CD8-positive, alpha-beta memory T cell (primary cell): ENCODE measurements at regions of chr1 and their contacts with region 1.

Region 1: DNA sequence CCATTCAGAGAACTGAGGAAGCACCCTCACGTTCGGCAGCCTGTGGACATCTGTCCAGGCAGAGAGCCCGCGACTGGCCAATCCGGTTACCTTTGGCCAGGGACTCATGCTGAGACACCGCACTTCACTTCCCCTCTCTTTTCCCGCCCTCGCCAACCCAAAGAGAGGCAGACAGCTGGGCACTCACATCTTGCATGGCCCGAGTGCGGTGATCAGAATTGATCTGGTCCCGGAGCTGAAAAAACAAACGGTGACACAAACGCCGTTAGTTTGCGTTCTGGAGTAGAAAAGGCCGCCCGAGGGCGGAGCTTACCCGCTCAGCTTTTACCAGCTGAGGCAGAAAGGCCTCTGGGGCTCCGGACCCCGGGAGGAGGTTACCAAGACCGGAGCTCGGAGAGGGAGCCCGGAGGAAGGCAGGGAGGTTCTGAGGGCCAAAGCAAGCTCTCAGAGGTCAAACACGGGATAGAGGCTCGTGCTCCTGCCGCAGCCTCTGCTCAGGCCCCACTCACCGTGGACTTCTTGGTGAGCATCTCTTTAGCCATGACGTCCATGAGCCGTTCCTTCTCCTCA is 376 bp downstream of the SF3A3 start:
- DNase-seq: peak in 2 of 5 donors; percentile 26 to 61
- H3K4me3 ChIP-seq: peak overlapping the region; percentile 96
- H3K4me3 Mint-ChIP-seq: peak overlapping the region; percentile 89 to 100 (median 99)
- H3K27ac ChIP-seq: peak overlapping the region; percentile 83
- H3K27ac Mint-ChIP-seq: peak overlapping the region; percentile 63 to 99 (median 96)
- H3K4me1 ChIP-seq: peaks cover 11% of the 10 kb centered on the region
- H3K4me1 Mint-ChIP-seq: peaks cover 19 to 31% (median 30%) of the 10 kb centered on the region in 3 donors
- H3K27me3 ChIP-seq: no peaks in the 10 kb centered on the region
- H3K27me3 Mint-ChIP-seq: peaks cover 0 to 2% of the 10 kb centered on the region in 2 donors

Region 2: GRCh38 chr1:37919277-37919676 is 70.2 kb before region 1 on chr1:
- CTCF ChIA-PET with region 1: no interaction called
- POLR2A ChIA-PET with region 1: no interaction called
- DNase-seq: no peak
- H3K4me3 ChIP-seq: no peak overlapping the region
- H3K4me3 Mint-ChIP-seq: peak overlapping the region in 1 of 7 donors; percentile 24
- H3K27ac ChIP-seq: no peak overlapping the region
- H3K27ac Mint-ChIP-seq: peak overlapping the region in 2 of 8 donors; percentile 18 to 29
- H3K4me1 ChIP-seq: peaks cover 13% of the 10 kb centered on the region
- H3K4me1 Mint-ChIP-seq: peaks cover 29 to 50% (median 35%) of the 10 kb centered on the region in 3 donors
- H3K27me3 ChIP-seq: no peaks in the 10 kb centered on the region
- H3K27me3 Mint-ChIP-seq: no peaks in the 10 kb centered on the region

Region 3: DNA sequence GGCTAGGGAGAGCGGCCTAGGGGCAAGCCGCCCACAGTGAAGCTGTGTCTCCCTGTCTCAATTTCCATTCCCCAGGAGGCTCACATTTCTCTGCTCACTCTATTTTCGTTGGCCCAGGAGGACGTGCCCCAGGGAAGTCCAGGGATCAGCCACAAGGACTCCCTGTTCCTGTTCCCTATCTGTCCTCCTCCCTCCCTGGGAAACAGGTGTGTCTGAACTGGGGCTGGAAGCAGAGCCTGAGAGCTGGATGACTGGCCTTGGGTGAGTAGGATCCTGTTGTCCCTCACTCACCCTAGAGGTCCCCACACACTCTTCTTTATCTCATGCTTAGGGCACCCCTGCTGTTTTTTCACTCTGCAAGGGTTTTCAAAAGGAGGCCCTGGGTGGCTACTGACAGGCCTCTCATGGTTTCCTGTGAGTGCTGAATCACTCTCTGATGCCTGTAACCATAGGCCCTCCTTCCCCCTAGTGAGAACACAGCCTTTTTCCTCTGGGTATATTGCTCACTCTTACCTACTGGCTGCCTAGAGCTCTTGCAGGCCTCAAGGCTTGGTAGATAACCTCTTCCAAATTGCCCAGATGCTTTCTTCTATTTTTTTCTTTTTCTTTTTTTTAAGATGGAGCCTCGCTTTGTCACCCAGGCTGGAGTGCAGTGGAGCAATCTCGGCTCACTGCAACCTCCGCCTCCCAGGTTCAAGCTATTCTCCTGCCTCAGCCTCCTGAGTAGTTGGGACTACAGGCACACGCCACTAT is 19.8 kb after region 1 on chr1:
- CTCF ChIA-PET with region 1: interaction called, 10 read pairs
- POLR2A ChIA-PET with region 1: no interaction called
- DNase-seq: peak in 4 of 5 donors; percentile 22 to 60 (median 52)
- H3K4me3 ChIP-seq: no peak overlapping the region
- H3K4me3 Mint-ChIP-seq: peak overlapping the region in 5 of 7 donors; percentile 19 to 77 (median 37)
- H3K27ac ChIP-seq: peak overlapping the region; percentile 67
- H3K27ac Mint-ChIP-seq: peak overlapping the region; percentile 72 to 97 (median 92)
- H3K4me1 ChIP-seq: peaks cover 49% of the 10 kb centered on the region
- H3K4me1 Mint-ChIP-seq: peaks cover 54 to 60% (median 55%) of the 10 kb centered on the region in 3 donors
- H3K27me3 ChIP-seq: no peaks in the 10 kb centered on the region
- H3K27me3 Mint-ChIP-seq: peaks cover 2 to 4% of the 10 kb centered on the region in 2 donors

Region 4: GRCh38 chr1:38018864-38019343 is 29.5 kb after region 1 on chr1:
- CTCF ChIA-PET with region 1: interaction called, 18 read pairs
- POLR2A ChIA-PET with region 1: no interaction called
- DNase-seq: peak in 1 of 5 donors; percentile 51
- H3K4me3 ChIP-seq: no peak overlapping the region
- H3K4me3 Mint-ChIP-seq: peak overlapping the region in 1 of 7 donors; percentile 57
- H3K27ac ChIP-seq: no peak overlapping the region
- H3K27ac Mint-ChIP-seq: peak overlapping the region in 4 of 8 donors; percentile 7 to 87 (median 44)
- H3K4me1 ChIP-seq: peaks cover 8% of the 10 kb centered on the region
- H3K4me1 Mint-ChIP-seq: peaks cover 9 to 27% (median 15%) of the 10 kb centered on the region in 3 donors
- H3K27me3 ChIP-seq: no peaks in the 10 kb centered on the region
- H3K27me3 Mint-ChIP-seq: no peaks in the 10 kb centered on the region